Lower leg skin (tissue), 4 donors: ENCODE measurements at regions of chr19 and their contacts with region 1.

Region 1: DNA sequence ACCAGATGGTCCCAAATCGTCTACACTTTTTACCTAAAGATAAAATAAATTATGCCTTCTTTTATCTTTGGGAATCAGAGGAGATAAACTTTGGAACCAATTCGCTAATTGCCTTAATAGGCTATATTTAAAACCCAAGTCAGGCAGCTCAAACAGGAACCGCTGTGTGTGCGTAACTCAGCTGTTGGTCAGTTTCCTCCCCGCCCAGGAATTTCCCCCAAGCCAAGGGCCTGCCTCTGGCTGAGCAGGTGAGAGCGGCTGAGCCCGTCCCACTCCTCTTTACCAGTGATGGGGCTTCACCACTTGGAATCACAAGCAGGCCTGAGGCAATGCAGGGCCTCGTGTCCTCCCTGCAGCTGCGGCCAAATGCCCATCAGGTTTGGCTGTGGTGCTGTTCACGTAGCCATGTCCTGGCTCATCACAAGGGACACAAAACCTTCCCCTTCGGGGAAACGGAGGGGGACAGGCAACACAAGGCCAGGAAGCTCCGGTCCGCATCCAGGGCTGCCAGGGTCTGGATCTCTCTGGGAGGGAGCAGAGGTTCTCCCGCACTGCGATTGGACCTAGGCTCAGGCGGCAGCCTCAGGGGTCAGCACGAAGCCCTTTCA is 503 bp upstream of the SLC7A9 start:
- DNase-seq: peak in 1 of 2 donors; percentile 72
- H3K4me3 ChIP-seq: no peak overlapping the region
- CTCF ChIP-seq: no peak
- POLR2A ChIP-seq: no peak

Region 2: GRCh38 chr19:32427536-32427935 is 442.5 kb before region 1 on chr19:
- intact Hi-C with region 1: loop called (anchors 5 kb)
- DNase-seq: no peak
- H3K4me3 ChIP-seq: no peak overlapping the region
- CTCF ChIP-seq: no peak
- POLR2A ChIP-seq: no peak